ENCODE measurements at regions of chr3 and their contacts with region 1.

Region 1: GRCh38 chr3:149273096-149273751 is 51.6 kb upstream of the CP start:
- DNase-seq: peak in 1 of 2 donors; percentile 62
- ATAC-seq: peak; percentile 69 to 93 (median 86)
- H3K4me3 ChIP-seq: no peak overlapping the region
- H3K27ac ChIP-seq: peak overlapping the region in 4 of 10 donors; percentile 19 to 65 (median 44)
- H3K4me1 ChIP-seq: peaks cover 0 to 34% (median 10%) of the 10 kb centered on the region in 9 donors
- H3K27me3 ChIP-seq: no peaks in the 10 kb centered on the region
- CTCF ChIP-seq: peak; percentile 82 to 99 (median 92)

Region 2: GRCh38 chr3:149114458-149114857 is 158.8 kb before region 1 on chr3:
- intact Hi-C with region 1: loop called in 2 of 10 experiments (anchors 2 to 5 kb)
- DNase-seq: no peak
- ATAC-seq: peak in 2 of 8 donors; percentile 12 to 55
- H3K4me3 ChIP-seq: no peak overlapping the region
- H3K27ac ChIP-seq: no peak overlapping the region
- H3K4me1 ChIP-seq: peaks cover 0 to 8% (median 4%) of the 10 kb centered on the region in 9 donors
- H3K27me3 ChIP-seq: no peaks in the 10 kb centered on the region
- CTCF ChIP-seq: no peak

Region 3: DNA sequence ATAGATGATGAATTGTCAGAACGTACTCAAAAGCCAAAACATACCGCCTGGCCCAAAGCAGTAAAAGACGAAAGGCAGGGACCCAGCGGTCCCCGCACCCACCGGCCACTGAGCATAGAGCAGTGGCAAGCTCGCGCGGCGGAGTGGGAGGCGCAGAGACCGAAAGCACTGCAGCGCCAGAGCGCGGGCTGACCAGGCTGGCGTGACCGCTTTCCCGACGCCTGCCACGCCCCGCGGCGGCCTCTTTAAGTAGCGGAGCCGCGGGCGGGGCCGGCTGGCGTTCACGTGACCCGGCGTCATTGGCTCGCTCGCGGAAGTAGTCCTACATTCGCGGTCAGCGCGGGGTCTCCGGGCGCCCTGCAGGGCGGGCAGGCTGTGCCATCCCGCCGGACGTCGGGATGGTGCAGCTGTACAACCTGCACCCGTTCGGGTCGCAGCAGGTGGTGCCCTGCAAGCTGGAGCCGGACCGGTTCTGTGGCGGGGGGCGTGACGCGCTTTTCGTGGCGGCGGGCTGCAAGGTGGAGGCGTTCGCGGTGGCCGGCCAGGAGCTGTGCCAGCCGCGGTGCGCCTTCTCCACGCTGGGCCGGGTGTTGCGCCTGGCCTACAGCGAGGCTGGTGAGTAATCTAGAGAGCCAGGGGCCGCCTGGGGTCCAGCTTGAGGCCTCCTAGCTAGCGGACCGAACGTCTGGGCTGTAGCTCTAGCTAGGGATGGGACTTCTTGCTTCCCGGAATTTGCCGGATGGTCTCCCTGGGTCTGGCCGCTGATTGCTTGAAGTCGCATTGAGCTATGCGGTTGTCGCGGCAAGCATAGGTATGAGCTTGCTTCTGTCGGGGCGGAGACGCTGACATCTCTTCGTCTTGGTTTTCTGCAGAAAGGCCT is 143.7 kb before region 1 on chr3 and contains the start of gene HPS3:
- intact Hi-C with region 1: loop called in 1 of 10 experiments (anchors 2 kb)
- DNase-seq: peak; percentile 89 to 92
- ATAC-seq: peak; percentile 98 to 99 (median 99)
- H3K4me3 ChIP-seq: peak within 1 kb of the TSS; percentile 42 to 99 (median 88)
- H3K27ac ChIP-seq: peak within 1 kb of the TSS; percentile 19 to 90 (median 84)
- H3K4me1 ChIP-seq: peaks cover 0 to 38% (median 30%) of the 10 kb centered on the region in 9 donors
- H3K27me3 ChIP-seq: no peaks in the 10 kb centered on the region
- CTCF ChIP-seq: peak in 4 of 9 donors; percentile 4 to 24 (median 21)
- total RNA-seq, gene HPS3: 3.9 to 12.8 (median 5.0) TPM

Region 4: GRCh38 chr3:149339931-149340309 is 66.7 kb after region 1 on chr3:
- intact Hi-C with region 1: loop called in 1 of 10 experiments (anchors 5 kb)
- DNase-seq: peak; percentile 69 to 89
- ATAC-seq: peak; percentile 89 to 99 (median 98)
- H3K4me3 ChIP-seq: peak overlapping the region in 4 of 10 donors; percentile 0 to 29 (median 12)
- H3K27ac ChIP-seq: peak overlapping the region; percentile 77 to 97 (median 85)
- H3K4me1 ChIP-seq: peaks cover 8 to 65% (median 34%) of the 10 kb centered on the region in 9 donors
- H3K27me3 ChIP-seq: no peaks in the 10 kb centered on the region
- CTCF ChIP-seq: no peak

Region 5: GRCh38 chr3:149460117-149460516 is 186.9 kb after region 1 on chr3:
- intact Hi-C with region 1: no loop called
- DNase-seq: peak in 1 of 2 donors; percentile 29
- ATAC-seq: peak in 7 of 8 donors; percentile 69 to 84 (median 76)
- H3K4me3 ChIP-seq: no peak overlapping the region
- H3K27ac ChIP-seq: peak overlapping the region in 5 of 10 donors; percentile 8 to 59 (median 37)
- H3K4me1 ChIP-seq: peaks cover 0 to 7% (median 0%) of the 10 kb centered on the region in 9 donors
- H3K27me3 ChIP-seq: no peaks in the 10 kb centered on the region
- CTCF ChIP-seq: no peak

Region 6: DNA sequence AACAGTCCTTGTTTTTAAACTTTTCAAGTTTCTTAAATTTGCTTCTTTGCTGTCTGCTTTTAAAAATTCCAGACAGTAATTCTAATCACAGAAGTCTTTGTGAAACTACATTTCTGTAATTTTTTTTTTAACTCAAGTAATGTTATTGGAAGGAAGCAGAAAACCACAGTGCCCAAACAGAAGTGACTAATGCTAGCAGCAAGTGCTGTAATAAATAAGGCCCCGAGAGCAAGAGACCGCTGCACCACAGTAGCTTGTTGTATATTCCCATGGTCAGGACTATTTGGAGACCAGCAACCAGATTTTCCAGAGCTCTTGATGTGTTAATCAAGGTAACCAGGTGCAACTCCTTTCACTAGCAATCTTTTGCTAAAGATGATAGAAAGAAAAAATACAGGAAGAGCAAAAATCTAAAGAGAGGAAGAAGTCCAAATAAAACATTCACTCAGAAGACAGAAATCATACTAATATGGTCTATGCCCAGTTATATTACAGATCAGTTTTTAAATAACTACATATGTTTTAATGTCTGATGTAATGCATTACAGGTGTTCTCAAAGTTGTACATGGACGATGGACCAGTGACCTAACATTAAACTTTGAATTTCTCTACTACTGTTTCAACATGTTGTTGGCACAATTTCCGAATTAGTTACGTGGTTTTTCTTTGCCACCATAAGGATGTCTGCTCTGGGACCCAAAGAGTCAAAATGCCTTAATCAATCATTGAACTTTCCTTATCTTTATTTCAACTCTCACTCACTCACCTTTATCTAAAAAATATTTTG is 348.2 kb after region 1 on chr3:
- intact Hi-C with region 1: no loop called
- DNase-seq: no peak
- ATAC-seq: no peak
- H3K4me3 ChIP-seq: no peak overlapping the region
- H3K27ac ChIP-seq: peak overlapping the region in 5 of 10 donors; percentile 3 to 72 (median 46)
- H3K4me1 ChIP-seq: peaks cover 11 to 89% (median 72%) of the 10 kb centered on the region in 9 donors
- H3K27me3 ChIP-seq: peaks cover 0 to 80% (median 0%) of the 10 kb centered on the region in 7 donors
- CTCF ChIP-seq: no peak